Activated CD8-positive, alpha-beta T cell treated with anti-CD3 and anti-CD28 coated beads, Interleukin-2, amount 10 ng/mL, durations not matched to agents 7 days and 5 days (primary cell): ENCODE measurements at regions of chr16 and their contacts with region 1.

Region 1: GRCh38 chr16:25051406-25052150 is 36.4 kb upstream of the ARHGAP17 start:
- DNase-seq: no peak
- ATAC-seq: peak; percentile 16
- H3K4me3 Mint-ChIP-seq: peak overlapping the region; percentile 44
- H3K27ac Mint-ChIP-seq: peak overlapping the region; percentile 72
- H3K4me1 Mint-ChIP-seq: peaks cover 53% of the 10 kb centered on the region
- H3K27me3 Mint-ChIP-seq: no peaks in the 10 kb centered on the region

Region 2: GRCh38 chr16:24863582-24864437 is 187.8 kb before region 1 on chr16:
- CTCF ChIA-PET with region 1: no interaction called
- POLR2A ChIA-PET with region 1: no interaction called
- DNase-seq: no peak
- ATAC-seq: no peak
- H3K4me3 Mint-ChIP-seq: no peak overlapping the region
- H3K27ac Mint-ChIP-seq: no peak overlapping the region
- H3K4me1 Mint-ChIP-seq: no peaks in the 10 kb centered on the region
- H3K27me3 Mint-ChIP-seq: no peaks in the 10 kb centered on the region

Region 3: GRCh38 chr16:25014500-25015147 is 37.0 kb before region 1 on chr16:
- CTCF ChIA-PET with region 1: interaction called, 16 read pairs
- POLR2A ChIA-PET with region 1: interaction called, 50 read pairs
- DNase-seq: peak; percentile 35
- ATAC-seq: peak; percentile 48
- H3K4me3 Mint-ChIP-seq: peak overlapping the region; percentile 92
- H3K27ac Mint-ChIP-seq: peak overlapping the region; percentile 92
- H3K4me1 Mint-ChIP-seq: peaks cover 78% of the 10 kb centered on the region
- H3K27me3 Mint-ChIP-seq: no peaks in the 10 kb centered on the region

Region 4: GRCh38 chr16:25031441-25032307 is 19.9 kb before region 1 on chr16:
- CTCF ChIA-PET with region 1: interaction called, 10 read pairs
- POLR2A ChIA-PET with region 1: interaction called, 51 read pairs
- DNase-seq: peak; percentile 96
- ATAC-seq: peak; percentile 100
- H3K4me3 Mint-ChIP-seq: peak overlapping the region; percentile 96
- H3K27ac Mint-ChIP-seq: peak overlapping the region; percentile 90
- H3K4me1 Mint-ChIP-seq: peaks cover 28% of the 10 kb centered on the region
- H3K27me3 Mint-ChIP-seq: no peaks in the 10 kb centered on the region

Region 5: GRCh38 chr16:25066747-25067631 is 15.4 kb after region 1 on chr16:
- CTCF ChIA-PET with region 1: interaction called, 7 read pairs
- POLR2A ChIA-PET with region 1: interaction called, 30 read pairs
- DNase-seq: peak; percentile 90
- ATAC-seq: peak; percentile 96
- H3K4me3 Mint-ChIP-seq: peak overlapping the region; percentile 84
- H3K27ac Mint-ChIP-seq: peak overlapping the region; percentile 87
- H3K4me1 Mint-ChIP-seq: peaks cover 49% of the 10 kb centered on the region
- H3K27me3 Mint-ChIP-seq: no peaks in the 10 kb centered on the region

Region 6: DNA sequence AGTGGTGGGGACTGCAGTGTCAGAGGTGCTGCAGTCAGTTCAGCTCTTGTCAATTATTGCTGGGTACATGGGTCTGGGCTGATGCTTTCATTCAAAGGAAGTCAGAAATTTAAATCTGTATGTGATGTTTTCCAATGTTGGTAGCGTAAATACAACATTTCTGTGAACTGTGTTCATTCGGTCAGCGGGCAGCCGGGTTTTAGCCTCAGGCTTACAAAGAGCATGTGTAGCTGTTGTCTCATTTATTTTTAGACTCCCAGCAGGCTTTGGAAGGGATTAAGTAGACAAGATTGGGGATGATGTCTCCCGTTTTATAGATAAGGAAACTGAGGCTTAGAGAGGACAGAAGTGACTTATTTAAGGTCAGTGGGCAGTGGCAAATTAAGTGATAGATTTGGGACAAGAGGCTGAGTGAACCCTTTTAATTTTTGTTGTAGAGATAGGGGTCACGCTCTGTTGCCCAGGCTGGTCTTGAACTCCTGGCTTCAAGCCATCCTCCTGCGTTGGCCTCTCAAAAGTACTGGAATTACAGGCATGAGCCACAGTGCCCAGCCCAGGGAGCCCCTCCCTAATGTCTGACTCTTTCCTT is 173.2 kb after region 1 on chr16:
- CTCF ChIA-PET with region 1: interaction called, 25 read pairs
- POLR2A ChIA-PET with region 1: interaction called, 4 read pairs
- DNase-seq: no peak
- ATAC-seq: no peak
- H3K4me3 Mint-ChIP-seq: no peak overlapping the region
- H3K27ac Mint-ChIP-seq: no peak overlapping the region
- H3K4me1 Mint-ChIP-seq: peaks cover 2% of the 10 kb centered on the region
- H3K27me3 Mint-ChIP-seq: no peaks in the 10 kb centered on the region